HEK293 (cell line): ENCODE measurements at regions of chr3 and their contacts with region 1.

Region 1: DNA sequence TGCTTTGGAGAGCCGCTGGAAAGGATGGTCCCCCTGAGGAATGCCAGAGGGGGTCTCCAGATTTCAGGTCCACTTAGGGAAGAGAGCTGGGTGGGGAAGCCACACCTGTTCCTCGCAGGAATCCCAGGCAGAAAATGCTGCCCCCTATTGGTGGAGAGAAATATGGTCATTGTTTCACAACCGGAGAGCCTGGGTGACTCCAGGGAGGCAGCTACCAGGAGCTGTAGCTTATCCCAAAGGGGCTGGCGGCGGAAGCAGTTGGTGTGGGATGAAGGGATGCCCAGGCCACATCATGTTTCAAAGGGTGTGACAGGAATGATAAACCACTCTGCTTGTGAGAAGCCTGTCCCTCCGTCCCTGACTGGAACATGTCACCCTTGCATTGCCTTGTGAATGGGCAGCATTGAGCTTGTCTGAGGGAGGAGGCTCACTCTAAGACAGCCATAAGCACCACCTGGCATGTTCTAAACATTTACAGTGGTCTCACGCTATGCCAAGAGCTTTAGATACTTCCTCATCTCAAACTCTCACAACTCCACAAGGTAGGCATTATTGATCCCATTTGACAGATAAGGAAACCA is 34.5 kb downstream of the POMGNT2 start:
- H3K4me3 ChIP-seq: no peak overlapping the region
- H3K27ac ChIP-seq: no peak overlapping the region
- H3K4me1 ChIP-seq: no peaks in the 10 kb centered on the region
- CTCF ChIP-seq: no peak

Region 2: GRCh38 chr3:43031485-43031884 is 39.9 kb before region 1 on chr3:
- CTCF ChIA-PET with region 1: no interaction called
- POLR2A ChIA-PET with region 1: no interaction called
- H3K4me3 ChIP-seq: no peak overlapping the region
- H3K27ac ChIP-seq: no peak overlapping the region
- H3K4me1 ChIP-seq: no peaks in the 10 kb centered on the region
- CTCF ChIP-seq: no peak

Region 3: DNA sequence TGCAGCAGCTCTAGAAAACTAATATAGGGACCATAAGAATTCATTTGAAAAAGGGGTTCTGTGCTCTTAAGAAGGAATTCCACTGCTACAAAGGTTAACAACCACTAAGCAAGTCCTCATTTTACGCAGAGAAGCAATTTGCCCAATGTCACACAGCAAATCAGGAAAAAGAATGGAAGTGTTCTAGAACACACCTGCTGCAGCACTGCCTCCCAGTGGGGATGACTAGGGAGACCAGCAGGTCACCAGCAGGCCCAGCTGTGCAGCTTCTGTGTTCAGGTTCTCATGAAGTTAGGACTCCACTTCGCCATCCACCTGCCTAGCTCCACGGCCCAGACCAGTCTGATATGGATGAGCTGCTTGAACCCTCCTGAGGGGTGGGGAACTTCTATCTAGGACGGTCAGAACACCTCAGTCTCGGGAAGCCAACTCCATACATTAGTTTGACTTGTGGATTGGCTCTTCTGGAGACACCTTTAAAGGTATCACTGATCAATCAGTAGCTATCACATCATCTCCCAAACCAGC is 15.9 kb after region 1 on chr3:
- CTCF ChIA-PET with region 1: interaction called, 12 read pairs
- POLR2A ChIA-PET with region 1: no interaction called
- H3K4me3 ChIP-seq: no peak overlapping the region
- H3K27ac ChIP-seq: no peak overlapping the region
- H3K4me1 ChIP-seq: no peaks in the 10 kb centered on the region; the same call in 1 of the 2 replicates
- CTCF ChIP-seq: no peak